ENCODE measurements at regions of chr1 and their contacts with region 1.

Region 1: DNA sequence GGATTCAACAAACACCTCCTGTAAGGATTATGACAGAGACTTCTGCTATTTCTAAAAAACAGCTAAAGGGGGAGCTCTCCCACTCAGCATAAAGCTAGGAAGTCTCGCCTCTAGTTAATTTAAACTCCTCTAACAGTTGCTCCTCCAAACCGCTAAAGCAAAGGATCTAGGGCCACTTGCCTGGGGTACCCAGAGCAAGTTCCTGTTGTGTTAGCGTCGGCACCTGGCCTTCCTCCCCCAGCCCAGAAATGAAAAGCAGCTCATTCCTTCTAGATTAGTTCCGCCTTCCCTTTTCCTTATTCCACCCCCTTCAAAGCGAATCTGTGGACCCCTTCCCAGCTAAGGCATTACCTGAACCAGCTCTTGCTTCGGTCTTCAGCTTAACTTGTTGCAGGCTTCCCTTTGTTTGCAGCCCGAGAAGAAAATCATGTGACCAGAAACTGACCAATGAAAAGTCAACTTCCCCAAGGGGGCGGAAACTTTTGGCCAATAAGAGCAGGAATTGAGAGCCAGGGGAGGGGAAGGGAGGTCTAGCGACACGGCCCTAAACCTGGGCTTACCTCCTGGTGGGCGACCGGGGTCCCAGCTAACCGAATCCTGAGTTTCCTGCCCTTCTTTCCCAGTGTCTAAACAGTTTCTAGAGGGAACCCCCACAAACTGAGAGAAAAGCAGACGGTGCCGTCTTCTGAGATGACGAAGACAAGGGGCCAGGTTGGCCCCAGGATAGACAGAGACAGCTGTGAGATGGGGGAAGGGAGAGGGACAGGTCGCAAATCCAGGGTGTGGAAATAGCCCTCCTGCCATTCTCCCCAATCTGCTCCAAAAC is at the start of gene PBXIP1:
- DNase-seq: peak; percentile 94
- ATAC-seq: peak; percentile 68
- H3K4me3 ChIP-seq: peak within 1 kb of the TSS; percentile 71 to 97 (median 83)
- H3K4me3 Mint-ChIP-seq: peak within 1 kb of the TSS; percentile 92
- H3K27ac ChIP-seq: peak within 1 kb of the TSS; percentile 99
- H3K27ac Mint-ChIP-seq: peak within 1 kb of the TSS; percentile 96
- H3K4me1 ChIP-seq: peaks cover 59 to 68% of the 10 kb centered on the region in 2 donors
- H3K4me1 Mint-ChIP-seq: peaks cover 72% of the 10 kb centered on the region
- H3K27me3 ChIP-seq: no peaks in the 10 kb centered on the region
- H3K27me3 Mint-ChIP-seq: no peaks in the 10 kb centered on the region
- CTCF ChIP-seq: peak; percentile 39
- total RNA-seq, gene PBXIP1: 212 and 219 TPM in 2 replicates

Region 2: DNA sequence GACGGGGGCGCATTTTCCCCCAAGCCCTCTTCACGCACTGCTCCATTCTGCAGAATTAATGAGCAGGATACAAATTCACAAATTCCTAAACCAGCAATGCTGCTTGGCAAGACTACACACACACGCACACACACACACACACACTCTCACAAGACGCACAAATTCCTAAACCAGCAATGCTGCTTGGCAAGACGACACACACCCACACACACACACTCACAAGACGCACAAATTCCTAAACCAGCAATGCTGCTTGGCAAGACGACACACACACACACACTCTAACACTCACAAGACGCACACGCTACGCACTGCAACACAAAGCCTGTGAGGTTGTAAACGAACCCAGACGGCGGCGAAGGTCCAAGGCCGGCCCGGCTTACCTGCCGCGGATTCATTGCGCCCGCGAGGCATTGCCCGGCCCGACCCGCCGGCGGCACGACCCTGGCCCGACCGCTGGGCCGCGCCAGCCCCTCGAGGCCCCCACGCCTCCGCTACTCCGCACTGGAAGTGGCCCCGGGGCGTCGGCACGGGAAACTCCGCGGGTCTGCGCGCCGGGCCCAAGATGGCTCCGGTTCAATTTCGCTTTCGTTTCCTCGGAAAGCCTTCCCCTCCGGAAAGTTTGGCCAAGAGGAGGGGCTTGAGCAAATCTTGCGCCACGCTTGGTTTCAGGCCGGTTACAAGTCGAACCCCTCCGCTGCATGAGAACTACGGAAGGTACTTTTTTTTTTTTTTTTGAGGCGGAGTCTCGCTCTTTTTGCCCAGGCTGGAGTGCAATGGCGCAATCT is 348.1 kb before region 1 on chr1 and contains the start of gene ADAR:
- CTCF ChIA-PET with region 1: no interaction called
- POLR2A ChIA-PET with region 1: interaction called, 3 read pairs
- intact Hi-C with region 1: loop called (anchors 5 kb)
- DNase-seq: peak; percentile 96
- ATAC-seq: peak; percentile 92
- H3K4me3 ChIP-seq: peak within 1 kb of the TSS; percentile 83 to 96 (median 93)
- H3K4me3 Mint-ChIP-seq: peak within 1 kb of the TSS; percentile 98
- H3K27ac ChIP-seq: peak within 1 kb of the TSS; percentile 86 to 97
- H3K27ac Mint-ChIP-seq: peak within 1 kb of the TSS; percentile 96
- H3K4me1 ChIP-seq: peaks cover 50 to 60% of the 10 kb centered on the region in 2 donors
- H3K4me1 Mint-ChIP-seq: peaks cover 61% of the 10 kb centered on the region
- H3K27me3 ChIP-seq: no peaks in the 10 kb centered on the region
- H3K27me3 Mint-ChIP-seq: no peaks in the 10 kb centered on the region
- CTCF ChIP-seq: no peak
- total RNA-seq, gene ADAR: 221 and 241 TPM in 2 replicates

Region 3: DNA sequence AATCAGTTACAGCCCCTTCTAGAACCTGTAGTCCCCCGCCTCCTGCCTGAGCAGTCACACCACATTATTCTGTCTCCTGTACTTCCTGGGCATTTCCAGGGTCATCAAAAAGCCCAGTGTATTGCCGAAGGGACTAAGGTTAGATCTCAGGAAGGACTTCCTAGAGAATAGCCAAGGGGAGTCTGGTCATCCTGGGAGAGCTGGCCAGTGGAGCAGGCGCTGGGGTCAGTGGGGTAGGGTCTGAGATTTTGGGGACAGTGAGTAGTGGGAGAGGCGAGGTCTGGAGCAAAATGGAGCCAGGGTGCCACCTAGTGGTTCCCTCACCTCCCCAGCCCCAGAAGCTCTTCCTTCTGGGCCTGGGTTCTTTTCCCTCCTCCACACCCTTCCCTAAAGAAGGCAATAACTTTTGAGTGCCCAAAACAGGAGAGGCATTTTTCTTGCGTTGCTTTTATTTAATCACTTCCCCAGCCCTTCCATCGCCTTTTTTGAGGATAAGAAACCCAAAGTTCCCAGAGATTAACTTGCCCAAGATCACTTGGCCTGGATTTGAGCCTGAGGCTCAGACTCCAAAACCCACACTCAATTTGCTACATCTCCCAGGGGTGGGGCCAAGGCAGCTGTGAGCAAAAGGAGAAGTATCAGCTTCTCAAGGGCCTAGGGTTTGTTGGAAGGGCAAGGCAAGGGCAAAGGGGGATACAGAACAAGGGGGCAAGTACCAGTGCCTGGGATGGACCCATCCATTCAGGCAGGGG is 12.1 kb before region 1 on chr1:
- CTCF ChIA-PET with region 1: interaction called, 3 read pairs
- POLR2A ChIA-PET with region 1: interaction called, 7 read pairs
- intact Hi-C with region 1: loop called (anchors 1 kb)
- DNase-seq: peak; percentile 69
- ATAC-seq: peak; percentile 22
- H3K4me3 ChIP-seq: peak overlapping the region in 1 of 5 experiments; percentile 7
- H3K4me3 Mint-ChIP-seq: peak overlapping the region; percentile 72
- H3K27ac ChIP-seq: peak overlapping the region; percentile 58 to 88
- H3K27ac Mint-ChIP-seq: peak overlapping the region; percentile 89
- H3K4me1 ChIP-seq: peaks cover 47 to 63% of the 10 kb centered on the region in 2 donors
- H3K4me1 Mint-ChIP-seq: peaks cover 66% of the 10 kb centered on the region
- H3K27me3 ChIP-seq: no peaks in the 10 kb centered on the region
- H3K27me3 Mint-ChIP-seq: no peaks in the 10 kb centered on the region
- CTCF ChIP-seq: peak; percentile 71

Region 4: GRCh38 chr1:154974063-154974807 is 18.3 kb after region 1 on chr1 and contains the start of gene CKS1B:
- CTCF ChIA-PET with region 1: interaction called, 38 read pairs
- POLR2A ChIA-PET with region 1: interaction called, 26 read pairs
- intact Hi-C with region 1: loop called (anchors 1 kb)
- DNase-seq: peak; percentile 100
- ATAC-seq: peak; percentile 80
- H3K4me3 ChIP-seq: peak within 1 kb of the TSS; percentile 71 to 99 (median 90)
- H3K4me3 Mint-ChIP-seq: no peak within 1 kb of the TSS
- H3K27ac ChIP-seq: peak within 1 kb of the TSS; percentile 90 to 94
- H3K27ac Mint-ChIP-seq: no peak within 1 kb of the TSS
- H3K4me1 ChIP-seq: peaks cover 22 to 44% of the 10 kb centered on the region in 2 donors
- H3K4me1 Mint-ChIP-seq: peaks cover 29% of the 10 kb centered on the region
- H3K27me3 ChIP-seq: no peaks in the 10 kb centered on the region
- H3K27me3 Mint-ChIP-seq: no peaks in the 10 kb centered on the region
- CTCF ChIP-seq: no peak
- total RNA-seq, gene CKS1B: 16.8 and 17.5 TPM in 2 replicates

Region 5: GRCh38 chr1:154982897-154983648 is 27.1 kb after region 1 on chr1 and contains the start of gene FLAD1:
- CTCF ChIA-PET with region 1: interaction called, 16 read pairs
- POLR2A ChIA-PET with region 1: interaction called, 4 read pairs
- intact Hi-C with region 1: loop called (anchors 1 kb)
- DNase-seq: peak; percentile 98
- ATAC-seq: peak; percentile 99
- H3K4me3 ChIP-seq: peak within 1 kb of the TSS; percentile 58 to 93 (median 85)
- H3K4me3 Mint-ChIP-seq: no peak within 1 kb of the TSS
- H3K27ac ChIP-seq: peak within 1 kb of the TSS; percentile 30 to 84
- H3K27ac Mint-ChIP-seq: peak within 1 kb of the TSS; percentile 50
- H3K4me1 ChIP-seq: peaks cover 13 to 19% of the 10 kb centered on the region in 2 donors
- H3K4me1 Mint-ChIP-seq: peaks cover 11% of the 10 kb centered on the region
- H3K27me3 ChIP-seq: no peaks in the 10 kb centered on the region
- H3K27me3 Mint-ChIP-seq: no peaks in the 10 kb centered on the region
- CTCF ChIP-seq: no peak
- total RNA-seq, gene FLAD1: 49.6 and 51.4 TPM in 2 replicates

Region 6: GRCh38 chr1:155017041-155017945 is 61.4 kb after region 1 on chr1:
- CTCF ChIA-PET with region 1: interaction called, 61 read pairs
- POLR2A ChIA-PET with region 1: interaction called, 7 read pairs
- intact Hi-C with region 1: loop called (anchors 1 kb)
- DNase-seq: peak; percentile 93
- ATAC-seq: peak; percentile 75
- H3K4me3 ChIP-seq: peak overlapping the region; percentile 9 to 68 (median 49)
- H3K4me3 Mint-ChIP-seq: peak overlapping the region; percentile 84
- H3K27ac ChIP-seq: peak overlapping the region; percentile 88 to 89
- H3K27ac Mint-ChIP-seq: peak overlapping the region; percentile 93
- H3K4me1 ChIP-seq: peaks cover 53 to 67% of the 10 kb centered on the region in 2 donors
- H3K4me1 Mint-ChIP-seq: peaks cover 69% of the 10 kb centered on the region
- H3K27me3 ChIP-seq: no peaks in the 10 kb centered on the region
- H3K27me3 Mint-ChIP-seq: no peaks in the 10 kb centered on the region
- CTCF ChIP-seq: peak; percentile 99

Region 7: DNA sequence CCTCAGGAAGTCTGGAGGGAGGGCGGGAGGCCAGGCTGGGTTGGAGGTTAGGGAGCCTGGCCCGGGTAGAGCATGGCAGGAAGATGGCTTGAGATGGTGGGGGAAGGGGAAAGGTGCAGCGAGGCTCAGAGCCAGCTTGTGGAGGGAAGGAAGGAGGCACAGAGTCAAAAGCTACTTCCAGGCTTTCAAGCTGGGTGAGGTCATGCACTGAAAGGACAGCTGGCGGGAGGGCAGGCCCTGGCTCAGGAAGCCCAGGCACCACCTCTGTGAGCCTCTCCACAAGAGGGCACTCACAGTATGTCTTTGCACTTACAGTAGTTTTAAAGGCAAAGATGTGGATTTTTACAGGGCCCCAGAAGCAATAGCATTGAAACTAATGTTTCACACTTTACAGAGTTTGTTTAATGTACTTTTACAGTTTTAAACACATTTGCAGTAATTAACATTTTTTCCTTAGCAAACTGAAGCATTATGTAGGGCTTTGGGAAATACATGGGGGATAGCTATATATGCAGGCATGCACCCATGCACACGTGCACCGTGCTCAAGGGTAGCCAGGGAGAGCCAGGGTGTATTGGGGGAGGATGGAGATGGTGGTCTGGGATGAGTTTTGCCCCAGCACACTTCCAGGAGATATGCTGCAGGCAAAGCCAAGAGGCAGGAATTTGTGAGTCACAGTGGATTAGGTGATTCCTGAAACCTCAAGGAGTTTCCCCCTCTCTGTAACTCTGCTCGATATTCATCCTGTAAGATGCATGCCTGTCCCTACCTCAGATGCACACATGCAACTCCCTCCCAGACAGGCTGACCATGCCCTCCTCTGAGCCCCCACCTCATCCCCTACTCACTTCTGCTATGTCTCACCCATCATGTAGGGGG is 89.1 kb after region 1 on chr1:
- CTCF ChIA-PET with region 1: interaction called, 11 read pairs
- POLR2A ChIA-PET with region 1: interaction called, 4 read pairs
- intact Hi-C with region 1: no loop called
- DNase-seq: peak; percentile 76
- ATAC-seq: peak; percentile 92
- H3K4me3 ChIP-seq: no peak overlapping the region
- H3K4me3 Mint-ChIP-seq: peak overlapping the region; percentile 30
- H3K27ac ChIP-seq: no peak overlapping the region
- H3K27ac Mint-ChIP-seq: peak overlapping the region; percentile 54
- H3K4me1 ChIP-seq: peaks cover 0 to under 1% of the 10 kb centered on the region in 2 donors
- H3K4me1 Mint-ChIP-seq: peaks cover 10% of the 10 kb centered on the region
- H3K27me3 ChIP-seq: no peaks in the 10 kb centered on the region
- H3K27me3 Mint-ChIP-seq: peaks cover 3% of the 10 kb centered on the region
- CTCF ChIP-seq: peak; percentile 63